AG04449 (cell line): ENCODE measurements at regions of chr12 and their contacts with region 1.

Region 1: DNA sequence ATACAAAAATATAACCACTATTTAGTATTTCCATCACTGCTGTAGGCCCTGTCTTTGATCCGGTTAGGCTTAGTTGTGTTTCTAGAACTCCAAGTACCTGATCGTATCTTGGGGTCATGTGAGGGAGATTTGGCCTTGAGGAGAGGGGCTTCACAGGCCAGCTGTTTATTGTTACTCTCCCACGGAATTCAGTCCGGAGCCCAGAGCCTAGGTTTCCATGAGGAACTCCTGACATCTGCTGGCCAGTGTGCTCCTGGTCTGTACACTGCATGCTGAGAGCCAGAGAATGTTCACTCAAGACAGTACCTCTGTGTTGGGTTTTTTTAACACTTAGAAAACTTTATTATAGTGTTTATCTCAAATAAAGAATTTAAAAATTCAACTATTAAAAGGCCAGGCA is 341.0 kb upstream of the TMEM132C start:
- DNase-seq: no peak
- H3K4me3 ChIP-seq: no peak overlapping the region
- CTCF ChIP-seq: peak; percentile 75

Region 2: GRCh38 chr12:127911291-127911690 is 14.7 kb before region 1 on chr12:
- CTCF ChIA-PET with region 1: interaction called, 35 read pairs
- POLR2A ChIA-PET with region 1: no interaction called
- DNase-seq: no peak
- H3K4me3 ChIP-seq: no peak overlapping the region
- CTCF ChIP-seq: no peak

Region 3: GRCh38 chr12:127943481-127944210 is 17.7 kb after region 1 on chr12:
- CTCF ChIA-PET with region 1: interaction called, 10 read pairs
- POLR2A ChIA-PET with region 1: interaction called, 3 read pairs
- DNase-seq: no peak
- H3K4me3 ChIP-seq: no peak overlapping the region
- CTCF ChIP-seq: no peak

Region 4: GRCh38 chr12:128069359-128069997 is 143.5 kb after region 1 on chr12:
- CTCF ChIA-PET with region 1: interaction called, 19 read pairs
- POLR2A ChIA-PET with region 1: interaction called, 3 read pairs
- DNase-seq: peak; percentile 46
- H3K4me3 ChIP-seq: no peak overlapping the region
- CTCF ChIP-seq: peak; percentile 66

Region 5: DNA sequence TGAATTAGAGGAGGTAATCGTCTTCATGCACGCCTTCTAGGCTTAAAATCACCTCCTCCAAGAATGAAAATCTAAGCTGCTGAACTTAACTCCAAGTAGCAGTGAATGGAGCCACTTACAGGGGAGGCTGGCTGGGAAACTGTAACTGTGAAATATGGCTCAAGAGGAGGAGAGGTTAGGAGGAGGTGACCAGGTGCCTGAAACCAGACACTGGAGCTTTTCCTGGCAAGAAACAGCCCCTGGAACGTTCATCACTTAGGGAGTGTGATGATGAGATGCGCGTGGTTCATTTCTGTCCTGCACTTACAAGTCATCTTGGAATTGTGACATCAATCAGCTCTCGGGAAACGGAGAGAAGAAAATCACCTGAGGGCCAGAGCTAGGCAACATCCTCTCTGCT is 278.7 kb after region 1 on chr12:
- CTCF ChIA-PET with region 1: no interaction called
- POLR2A ChIA-PET with region 1: no interaction called
- DNase-seq: no peak
- H3K4me3 ChIP-seq: no peak overlapping the region
- CTCF ChIP-seq: no peak